CD8-positive, alpha-beta T cell (primary cell): ENCODE measurements at regions of chr7 and their contacts with region 1.

Region 1: GRCh38 chr7:125984795-125985194 is 1055.2 kb upstream of the POT1 start:
- DNase-seq: no peak
- ATAC-seq: no peak
- H3K4me3 ChIP-seq: no peak overlapping the region
- H3K4me3 Mint-ChIP-seq: no peak overlapping the region
- H3K27ac ChIP-seq: no peak overlapping the region
- H3K27ac Mint-ChIP-seq: no peak overlapping the region
- H3K4me1 ChIP-seq: no peaks in the 10 kb centered on the region
- H3K4me1 Mint-ChIP-seq: no peaks in the 10 kb centered on the region
- H3K27me3 ChIP-seq: no peaks in the 10 kb centered on the region
- H3K27me3 Mint-ChIP-seq: no peaks in the 10 kb centered on the region
- CTCF ChIP-seq: no peak

Region 2: GRCh38 chr7:126026421-126027088 is 41.8 kb after region 1 on chr7:
- CTCF ChIA-PET with region 1: no interaction called
- POLR2A ChIA-PET with region 1: no interaction called
- intact Hi-C with region 1: loop called in 1 of 2 experiments (anchors 5 kb)
- DNase-seq: no peak
- ATAC-seq: no peak
- H3K4me3 ChIP-seq: no peak overlapping the region
- H3K4me3 Mint-ChIP-seq: no peak overlapping the region
- H3K27ac ChIP-seq: no peak overlapping the region
- H3K27ac Mint-ChIP-seq: no peak overlapping the region
- H3K4me1 ChIP-seq: no peaks in the 10 kb centered on the region
- H3K4me1 Mint-ChIP-seq: no peaks in the 10 kb centered on the region
- H3K27me3 ChIP-seq: no peaks in the 10 kb centered on the region
- H3K27me3 Mint-ChIP-seq: no peaks in the 10 kb centered on the region
- CTCF ChIP-seq: no peak